RWPE1 (cell line): ENCODE measurements at regions of chr19 and their contacts with region 1.

Region 1: DNA sequence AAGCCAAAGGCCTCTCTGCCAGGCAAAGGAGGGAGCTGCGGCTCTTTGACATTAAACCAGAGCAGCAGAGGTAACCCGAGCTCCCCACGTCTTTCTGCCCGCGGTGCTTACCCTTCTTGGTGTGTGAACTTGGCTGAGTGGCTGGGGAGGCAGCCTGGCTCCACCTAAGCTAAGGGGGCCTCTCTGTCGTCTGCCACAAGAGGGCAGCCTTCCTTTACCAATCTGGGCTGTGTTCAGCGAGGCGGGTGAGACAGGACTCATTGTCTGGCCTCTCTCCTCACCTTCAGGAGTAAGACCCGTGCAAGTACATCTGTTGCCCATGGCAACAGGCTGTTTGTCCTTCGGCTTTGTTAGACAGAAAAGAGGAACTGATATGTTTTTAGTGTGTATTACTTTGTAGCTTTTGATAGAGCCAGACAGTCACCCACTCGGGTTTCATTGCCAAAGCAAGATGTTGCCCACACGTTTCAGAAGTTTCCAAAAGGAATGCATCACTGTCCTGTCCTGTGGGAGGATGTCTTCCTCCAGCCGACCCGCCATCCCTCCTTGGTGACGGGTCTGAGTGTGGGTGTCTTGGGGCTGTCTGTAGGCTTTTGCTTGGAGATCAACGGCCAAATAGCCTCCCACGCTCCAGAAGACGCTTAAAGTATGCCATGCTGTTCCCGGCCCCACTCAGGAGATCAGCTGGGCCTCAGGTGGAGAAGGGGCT is 4.6 kb downstream of the POP4 start:
- DNase-seq: peak; percentile 76
- H3K27ac ChIP-seq: no peak overlapping the region
- CTCF ChIP-seq: peak; percentile 83

Region 2: DNA sequence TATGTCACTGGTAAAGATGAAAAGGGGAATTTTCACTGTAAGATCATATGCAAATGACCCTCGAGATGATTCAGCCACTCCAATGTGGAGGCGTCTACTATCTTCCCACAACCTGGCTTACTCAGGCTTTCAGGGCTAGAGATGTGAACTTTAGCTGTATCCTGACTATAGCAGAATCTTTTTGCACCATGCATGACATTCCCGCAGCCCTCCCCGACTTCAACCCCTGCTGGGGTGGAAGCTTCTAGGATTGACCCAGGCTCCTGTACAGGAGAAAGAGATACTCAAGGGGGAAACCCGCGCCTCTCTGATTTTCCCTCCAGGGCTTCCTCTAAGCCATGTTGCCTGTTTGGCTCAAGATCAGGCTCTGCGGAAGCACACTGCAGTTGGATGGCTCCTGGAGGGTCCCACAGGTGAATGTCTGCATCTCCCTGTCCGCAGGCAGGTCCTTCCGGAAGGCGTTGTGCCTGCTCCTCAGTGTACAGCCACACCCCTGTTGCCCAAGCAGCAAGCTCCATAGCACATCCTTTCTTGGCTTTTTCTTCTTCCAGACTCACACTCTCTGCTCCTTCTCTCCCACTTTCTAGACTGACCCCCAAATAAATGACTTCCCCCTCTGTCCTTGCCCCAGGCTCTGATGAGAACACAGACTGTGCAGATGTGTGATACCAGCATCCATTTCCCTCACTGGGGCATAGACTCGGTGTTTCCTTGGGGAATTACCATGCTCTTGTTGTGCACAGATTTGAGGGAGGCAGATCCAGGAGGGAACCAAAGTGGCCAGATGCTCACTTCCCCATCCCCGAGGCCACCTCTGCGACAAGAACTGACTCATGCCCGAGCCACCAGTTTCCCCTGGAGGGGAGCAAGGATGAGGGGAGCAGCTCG is 33.7 kb before region 1 on chr19:
- CTCF ChIA-PET with region 1: no interaction called
- POLR2A ChIA-PET with region 1: no interaction called
- DNase-seq: no peak
- H3K27ac ChIP-seq: no peak overlapping the region
- CTCF ChIP-seq: no peak

Region 3: GRCh38 chr19:29714953-29715700 is 104.4 kb after region 1 on chr19 and contains the start of gene C19orf12:
- CTCF ChIA-PET with region 1: interaction called, 38 read pairs
- POLR2A ChIA-PET with region 1: interaction called, 5 read pairs
- DNase-seq: peak; percentile 25
- H3K27ac ChIP-seq: peak within 1 kb of the TSS; percentile 81
- CTCF ChIP-seq: no peak